ENCODE measurements at regions of chr5 and their contacts with region 1.

Region 1: DNA sequence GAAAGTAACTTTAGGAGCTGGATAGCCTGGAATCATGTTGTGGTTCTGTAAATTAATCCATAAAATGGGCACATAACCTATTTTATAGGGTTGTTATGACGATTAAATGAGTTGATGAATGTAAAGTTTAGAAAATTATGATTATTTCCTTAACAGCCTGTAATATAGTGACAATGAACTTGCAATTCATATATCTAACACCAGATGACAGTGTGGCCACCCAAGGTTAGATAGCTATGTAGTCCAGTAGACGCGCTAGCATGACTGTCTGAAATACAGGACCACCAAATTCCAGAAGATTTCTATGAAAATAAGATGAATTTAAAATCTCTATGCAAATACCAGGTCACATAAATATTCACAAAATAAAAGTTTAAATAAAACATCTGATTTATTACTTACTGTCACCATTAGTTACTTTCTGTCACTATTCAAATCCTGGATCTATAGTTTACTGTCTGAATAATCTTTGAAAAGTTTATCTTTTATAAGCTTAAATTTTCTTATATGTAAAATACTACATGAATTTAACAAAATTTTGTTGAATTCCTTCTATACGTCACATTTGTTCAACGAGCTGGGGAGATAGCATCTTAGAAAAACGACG is 26.1 kb upstream of the MACIR start:
- DNase-seq: peak; percentile 12
- ATAC-seq: peak; percentile 74
- H3K4me3 Mint-ChIP-seq: no peak overlapping the region
- H3K27ac Mint-ChIP-seq: no peak overlapping the region
- H3K4me1 Mint-ChIP-seq: no peaks in the 10 kb centered on the region
- H3K27me3 Mint-ChIP-seq: peaks cover 3% of the 10 kb centered on the region

Region 2: DNA sequence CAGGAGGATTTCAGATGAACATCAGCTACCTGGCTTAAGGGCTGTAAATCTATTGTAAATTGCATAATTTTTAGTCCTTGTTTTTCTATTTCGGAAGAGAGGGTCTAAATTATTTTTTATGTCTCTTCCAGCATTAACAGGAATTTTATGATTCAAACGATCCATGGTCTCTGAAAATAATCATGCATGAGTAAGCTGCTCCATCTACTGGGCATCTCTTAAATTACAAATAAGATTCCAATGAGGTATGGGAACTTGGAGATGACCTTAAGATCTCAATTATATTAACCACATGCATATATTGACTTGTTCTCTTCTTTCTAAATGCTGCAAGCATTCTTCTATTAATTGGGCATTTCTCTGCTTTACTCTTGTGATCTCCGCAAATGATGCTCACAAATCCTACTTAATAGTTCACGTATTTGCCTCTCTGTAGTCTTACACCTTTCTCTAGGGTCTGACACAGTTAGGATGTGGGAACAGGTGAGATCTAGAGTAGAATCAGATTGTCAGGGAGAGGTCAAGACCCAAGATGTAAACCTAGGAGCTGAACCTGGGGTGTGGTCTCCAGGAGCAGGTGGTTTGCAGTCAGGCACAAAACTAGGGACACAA is 243.2 kb after region 1 on chr5:
- CTCF ChIA-PET with region 1: interaction called, 43 read pairs
- POLR2A ChIA-PET with region 1: no interaction called
- intact Hi-C with region 1: loop called (anchors 1 kb)
- DNase-seq: no peak
- ATAC-seq: no peak
- H3K4me3 Mint-ChIP-seq: no peak overlapping the region
- H3K27ac Mint-ChIP-seq: no peak overlapping the region
- H3K4me1 Mint-ChIP-seq: no peaks in the 10 kb centered on the region
- H3K27me3 Mint-ChIP-seq: peaks cover 6% of the 10 kb centered on the region

Region 3: DNA sequence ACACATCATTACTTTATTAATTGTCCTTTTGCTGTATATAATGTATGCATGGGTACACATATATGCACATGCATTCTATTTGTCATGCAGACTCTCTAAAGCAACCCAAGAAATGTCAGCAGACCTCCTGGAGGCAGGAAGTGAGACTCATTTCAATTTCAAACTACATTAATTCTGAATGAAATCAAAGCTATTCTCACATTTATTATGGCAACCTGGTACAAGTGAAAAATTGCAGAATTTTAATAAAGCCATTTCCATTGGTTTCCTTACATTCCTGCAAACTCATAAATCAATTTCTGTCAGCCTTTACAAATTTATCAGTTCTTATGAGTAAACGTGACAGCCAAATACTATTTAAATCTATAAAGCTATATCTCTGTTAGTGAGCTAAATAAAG is 760.5 kb after region 1 on chr5:
- CTCF ChIA-PET with region 1: no interaction called
- POLR2A ChIA-PET with region 1: no interaction called
- intact Hi-C with region 1: no loop called
- DNase-seq: no peak
- ATAC-seq: no peak
- H3K4me3 Mint-ChIP-seq: no peak overlapping the region
- H3K27ac Mint-ChIP-seq: no peak overlapping the region
- H3K4me1 Mint-ChIP-seq: no peaks in the 10 kb centered on the region
- H3K27me3 Mint-ChIP-seq: no peaks in the 10 kb centered on the region